ENCODE measurements at regions of chr17 and their contacts with region 1.

Region 1: GRCh38 chr17:39014044-39014794 is 47.0 kb upstream of the FBXO47 start:
- DNase-seq: peak; percentile 32 to 83 (median 42)
- ATAC-seq: peak; percentile 79
- H3K4me3 ChIP-seq: no peak overlapping the region
- H3K27ac ChIP-seq: peak overlapping the region; percentile 86
- H3K4me1 ChIP-seq: peaks cover 23 to 46% of the 10 kb centered on the region in 2 experiments
- H3K27me3 ChIP-seq: no peaks in the 10 kb centered on the region
- CTCF ChIP-seq: no peak
- EP300 ChIP-seq: peak; percentile 56; the same call in 1 of the 2 replicates
- POLR2A ChIP-seq: no peak
- RAD21 ChIP-seq: no peak; a peak in 1 of 4 replicates

Region 2: DNA sequence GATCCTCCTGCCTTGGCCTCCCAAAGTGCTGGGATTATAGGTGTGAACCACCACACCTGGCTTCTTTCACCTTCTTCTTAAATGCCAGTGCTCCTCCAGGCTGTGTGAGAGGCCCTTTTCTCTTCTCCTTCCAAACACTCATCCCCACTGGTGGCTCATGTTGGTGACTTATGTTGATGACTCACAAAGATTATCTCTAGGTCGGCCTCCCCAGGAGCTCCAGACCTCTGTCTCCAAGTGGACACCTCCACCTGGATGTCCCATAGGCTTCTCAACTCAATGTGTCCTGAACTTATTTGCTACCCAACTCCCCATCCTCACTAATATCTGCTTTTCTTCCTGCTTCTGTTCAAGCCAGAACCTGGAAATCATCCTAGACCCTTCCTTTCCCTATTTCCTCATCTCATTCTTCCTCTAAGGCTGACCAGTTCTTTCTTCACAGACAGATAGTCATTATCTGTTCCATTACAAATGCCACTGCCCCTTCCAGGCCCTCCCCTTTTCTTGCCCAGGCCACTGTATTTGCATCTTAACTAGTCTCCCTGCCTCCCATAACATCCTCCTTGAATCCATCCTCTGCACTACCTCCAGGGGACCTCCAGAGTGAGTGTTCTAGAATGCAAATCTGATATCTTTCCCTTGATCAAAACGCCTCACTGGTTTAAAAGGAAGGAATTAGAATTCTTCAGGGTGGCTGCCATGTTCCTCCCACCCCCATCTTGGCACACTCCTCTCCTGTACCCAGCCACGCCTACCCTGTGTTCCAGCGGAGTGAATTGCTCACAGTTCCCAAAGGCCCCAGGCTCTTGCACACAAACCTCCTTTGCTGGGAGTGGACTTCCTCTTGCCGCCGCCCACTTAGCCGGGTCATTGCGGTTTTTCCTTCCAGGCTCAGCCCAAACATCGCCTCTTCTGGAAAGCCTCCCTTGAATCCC is 12.2 kb before region 1 on chr17:
- CTCF ChIA-PET with region 1: no interaction called
- POLR2A ChIA-PET with region 1: interaction called, 11 read pairs
- in situ Hi-C with region 1: no loop called
- intact Hi-C with region 1: no loop called
- DNase-seq: peak; percentile 29 to 77 (median 50)
- ATAC-seq: peak; percentile 81
- H3K4me3 ChIP-seq: no peak overlapping the region
- H3K27ac ChIP-seq: peak overlapping the region; percentile 63
- H3K4me1 ChIP-seq: peaks cover 27 to 36% of the 10 kb centered on the region in 2 experiments
- H3K27me3 ChIP-seq: no peaks in the 10 kb centered on the region
- CTCF ChIP-seq: 0 out of 6 replicates have a peak, but pooled peaks of 1 of the 3 experiments have one; percentile 11
- EP300 ChIP-seq: no peak
- POLR2A ChIP-seq: no peak
- RAD21 ChIP-seq: no peak

Region 3: GRCh38 chr17:39026980-39027451 is 12.8 kb after region 1 on chr17:
- CTCF ChIA-PET with region 1: no interaction called
- POLR2A ChIA-PET with region 1: interaction called, 16 read pairs
- in situ Hi-C with region 1: no loop called
- intact Hi-C with region 1: no loop called
- DNase-seq: peak in 3 of 4 experiments; percentile 20 to 35 (median 25)
- ATAC-seq: peak; percentile 74
- H3K4me3 ChIP-seq: no peak overlapping the region
- H3K27ac ChIP-seq: no peak overlapping the region
- H3K4me1 ChIP-seq: peaks cover 3 to 9% of the 10 kb centered on the region in 2 experiments; a peak in 4 of 5 replicates
- H3K27me3 ChIP-seq: no peaks in the 10 kb centered on the region
- CTCF ChIP-seq: no peak
- EP300 ChIP-seq: no peak
- POLR2A ChIP-seq: no peak
- RAD21 ChIP-seq: no peak